ENCODE measurements at regions of chr2 and their contacts with region 1.

Region 1: DNA sequence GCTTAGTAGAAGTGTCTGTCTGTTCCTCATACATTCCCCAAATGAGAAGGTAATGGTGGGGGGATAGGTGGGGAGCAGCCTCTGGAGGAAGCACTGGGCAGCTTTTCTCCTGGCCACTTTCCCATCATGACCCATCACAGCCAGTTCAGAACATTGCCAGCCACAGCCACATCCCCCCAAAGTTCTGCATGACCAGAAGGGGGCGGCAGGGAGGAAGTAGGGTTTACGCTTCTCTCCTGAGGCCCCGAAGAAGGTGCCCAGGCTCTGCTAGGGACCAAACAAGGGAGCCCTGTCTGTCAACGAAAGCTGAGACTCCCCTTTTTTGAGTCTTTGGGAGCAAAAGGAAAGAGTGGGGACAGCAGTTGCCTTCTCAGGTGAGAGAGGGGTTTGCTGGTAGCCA is 7.7 kb downstream of the IGFBP5 start:
- DNase-seq: no peak
- ATAC-seq: no peak
- H3K4me3 ChIP-seq: no peak overlapping the region
- H3K27ac ChIP-seq: peak overlapping the region; percentile 93 to 95 (median 93)
- H3K4me1 ChIP-seq: peaks cover 85 to 93% of the 10 kb centered on the region in 2 donors
- H3K27me3 ChIP-seq: no peaks in the 10 kb centered on the region
- CTCF ChIP-seq: peak in 2 of 5 experiments; percentile 44 to 54
- POLR2A ChIP-seq: no peak

Region 2: GRCh38 chr2:216260629-216261028 is 427.0 kb before region 1 on chr2:
- in situ Hi-C with region 1: no loop called
- intact Hi-C with region 1: no loop called
- DNase-seq: no peak
- ATAC-seq: no peak
- H3K4me3 ChIP-seq: no peak overlapping the region
- H3K27ac ChIP-seq: no peak overlapping the region
- H3K4me1 ChIP-seq: no peaks in the 10 kb centered on the region
- H3K27me3 ChIP-seq: no peaks in the 10 kb centered on the region
- CTCF ChIP-seq: no peak
- POLR2A ChIP-seq: no peak

Region 3: DNA sequence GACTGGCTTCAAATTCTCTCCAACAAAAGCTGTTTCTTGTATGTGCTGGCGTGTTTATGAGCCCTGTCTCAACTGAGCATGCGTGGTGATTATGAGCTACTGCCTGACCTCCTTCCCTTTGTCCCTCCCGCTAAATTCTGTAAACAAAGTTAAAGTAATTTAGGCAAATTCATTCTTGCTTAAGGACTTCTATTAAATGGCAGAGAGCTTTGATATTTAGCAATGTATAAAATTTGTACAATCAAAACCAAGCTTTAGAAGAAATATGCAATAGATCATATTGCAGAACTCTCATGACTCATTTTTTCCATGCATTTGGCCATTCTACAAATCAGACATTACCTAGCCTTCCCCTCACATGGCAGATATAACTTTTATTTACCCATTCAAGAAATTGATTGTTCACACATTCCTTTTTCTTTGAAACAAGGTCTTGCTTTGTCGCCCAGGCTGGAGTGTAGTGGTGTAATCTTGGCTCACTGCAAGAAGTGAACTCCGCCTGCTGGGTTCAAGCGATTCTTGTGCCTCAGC is 36.2 kb before region 1 on chr2:
- in situ Hi-C with region 1: no loop called
- intact Hi-C with region 1: no loop called
- DNase-seq: no peak
- ATAC-seq: no peak
- H3K4me3 ChIP-seq: no peak overlapping the region
- H3K27ac ChIP-seq: no peak overlapping the region
- H3K4me1 ChIP-seq: no peaks in the 10 kb centered on the region
- H3K27me3 ChIP-seq: no peaks in the 10 kb centered on the region
- CTCF ChIP-seq: no peak
- POLR2A ChIP-seq: no peak

Region 4: DNA sequence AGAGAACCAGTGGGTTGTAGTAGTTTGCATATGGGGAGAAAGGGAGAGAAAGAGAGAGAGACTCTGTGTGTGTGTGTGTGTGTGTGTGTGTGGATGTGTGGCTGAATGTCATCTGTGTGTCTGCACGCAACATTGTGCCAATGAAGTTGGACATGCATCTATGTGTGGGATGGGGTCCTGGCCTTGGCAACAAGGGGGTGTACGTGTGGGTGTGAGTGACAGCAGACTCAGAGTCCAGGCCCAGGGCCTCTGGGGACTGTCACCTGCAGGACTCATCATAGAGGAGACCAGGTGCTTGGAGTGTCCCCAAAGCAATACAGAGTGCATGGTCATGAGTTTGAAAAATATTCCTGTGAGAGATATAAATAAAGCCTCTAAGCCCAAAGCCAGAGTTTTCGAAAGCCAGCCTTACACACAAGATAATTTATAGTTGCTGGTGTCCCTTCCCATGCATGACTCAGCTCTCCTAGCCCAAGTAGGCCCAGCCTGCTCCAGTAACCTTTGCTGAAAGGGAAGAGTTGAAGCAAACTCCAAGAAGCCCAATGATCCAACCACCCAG is 112.3 kb after region 1 on chr2:
- in situ Hi-C with region 1: no loop called
- intact Hi-C with region 1: loop called (anchors 2 kb)
- DNase-seq: peak; percentile 91 to 93
- ATAC-seq: peak; percentile 69 to 75
- H3K4me3 ChIP-seq: no peak overlapping the region
- H3K27ac ChIP-seq: peak overlapping the region; percentile 87 to 98 (median 96)
- H3K4me1 ChIP-seq: peaks cover 55 to 57% of the 10 kb centered on the region in 2 donors
- H3K27me3 ChIP-seq: no peaks in the 10 kb centered on the region
- CTCF ChIP-seq: peak in 1 of 5 experiments; percentile 26
- POLR2A ChIP-seq: peak; percentile 21 to 33

Region 5: GRCh38 chr2:217064234-217065024 is 376.8 kb after region 1 on chr2:
- in situ Hi-C with region 1: no loop called
- intact Hi-C with region 1: no loop called
- DNase-seq: no peak
- ATAC-seq: peak; percentile 41 to 55
- H3K4me3 ChIP-seq: peak overlapping the region in 3 of 4 donors; percentile 26 to 37 (median 31)
- H3K27ac ChIP-seq: peak overlapping the region in 3 of 4 donors; percentile 3 to 18 (median 10)
- H3K4me1 ChIP-seq: peaks cover 3 to 7% of the 10 kb centered on the region in 2 donors
- H3K27me3 ChIP-seq: no peaks in the 10 kb centered on the region
- CTCF ChIP-seq: no peak
- POLR2A ChIP-seq: no peak

Region 6: DNA sequence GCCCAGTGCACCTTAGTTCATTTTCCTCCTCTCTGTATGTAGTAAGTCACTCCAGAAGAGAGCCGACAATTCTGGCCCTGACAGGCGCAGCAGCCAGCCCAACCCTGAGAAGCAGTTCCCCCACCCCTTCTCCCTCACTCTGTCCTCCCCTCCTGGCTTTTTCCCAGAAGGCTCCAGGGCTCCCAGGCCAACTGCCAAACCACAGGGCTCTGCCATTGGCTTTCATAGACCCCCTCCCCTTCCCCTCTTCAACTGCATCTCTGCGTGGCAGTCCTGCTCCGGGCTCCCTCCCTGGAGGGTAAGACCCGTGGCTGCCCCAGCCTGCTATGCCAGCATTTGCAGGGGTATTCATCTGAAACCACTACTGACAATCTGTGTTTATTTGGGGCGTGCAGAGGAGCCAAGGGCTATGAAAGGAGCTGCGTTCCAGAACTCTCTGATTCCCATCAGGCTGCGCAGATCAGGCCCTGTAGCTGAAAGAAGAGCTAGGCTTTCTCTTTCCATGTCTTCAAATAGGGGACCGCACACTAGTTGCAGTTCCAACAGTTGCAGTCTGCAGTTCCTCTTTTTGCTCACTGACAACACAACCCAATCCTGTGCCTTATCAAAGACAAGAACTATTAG is 560.8 kb after region 1 on chr2:
- in situ Hi-C with region 1: no loop called
- intact Hi-C with region 1: loop called (anchors 5 kb)
- DNase-seq: peak; percentile 16 to 63
- ATAC-seq: peak; percentile 60 to 63
- H3K4me3 ChIP-seq: peak overlapping the region; percentile 6 to 17 (median 11)
- H3K27ac ChIP-seq: peak overlapping the region; percentile 76 to 89 (median 82)
- H3K4me1 ChIP-seq: peaks cover 37 to 45% of the 10 kb centered on the region in 2 donors
- H3K27me3 ChIP-seq: no peaks in the 10 kb centered on the region
- CTCF ChIP-seq: no peak
- POLR2A ChIP-seq: no peak

Region 7: GRCh38 chr2:217434181-217434975 is 746.7 kb after region 1 on chr2:
- in situ Hi-C with region 1: no loop called
- intact Hi-C with region 1: loop called (anchors 5 kb)
- DNase-seq: peak; percentile 92
- ATAC-seq: peak; percentile 99 to 100
- H3K4me3 ChIP-seq: peak overlapping the region in 3 of 4 donors; percentile 13 to 31 (median 29)
- H3K27ac ChIP-seq: peak overlapping the region; percentile 52 to 69 (median 60)
- H3K4me1 ChIP-seq: peaks cover 31 to 50% of the 10 kb centered on the region in 2 donors
- H3K27me3 ChIP-seq: no peaks in the 10 kb centered on the region
- CTCF ChIP-seq: no peak
- POLR2A ChIP-seq: peak in 1 of 2 donors; percentile 7

Region 8: GRCh38 chr2:217713395-217714286 is 1026.0 kb after region 1 on chr2:
- in situ Hi-C with region 1: loop called (anchors 10 to 25 kb)
- intact Hi-C with region 1: loop called (anchors 5 kb)
- DNase-seq: peak; percentile 38 to 64
- ATAC-seq: peak; percentile 76 to 77
- H3K4me3 ChIP-seq: no peak overlapping the region
- H3K27ac ChIP-seq: peak overlapping the region; percentile 30 to 67 (median 41)
- H3K4me1 ChIP-seq: peaks cover 10 to 18% of the 10 kb centered on the region in 2 donors
- H3K27me3 ChIP-seq: no peaks in the 10 kb centered on the region
- CTCF ChIP-seq: peak; percentile 86 to 99 (median 93)
- POLR2A ChIP-seq: no peak

Region 9: GRCh38 chr2:218286570-218287459 is 1599.2 kb after region 1 on chr2:
- in situ Hi-C with region 1: no loop called
- intact Hi-C with region 1: loop called (anchors 10 kb)
- DNase-seq: peak; percentile 92 to 96
- ATAC-seq: peak; percentile 66 to 70
- H3K4me3 ChIP-seq: peak overlapping the region; percentile 59 to 70 (median 61)
- H3K27ac ChIP-seq: peak overlapping the region; percentile 93 to 100 (median 98)
- H3K4me1 ChIP-seq: peaks cover 92 to 97% of the 10 kb centered on the region in 2 donors
- H3K27me3 ChIP-seq: no peaks in the 10 kb centered on the region
- CTCF ChIP-seq: no peak
- POLR2A ChIP-seq: peak; percentile 66 to 69

Measured in gastrocnemius medialis (tissue), 4 donors.